ENCODE measurements at regions of chr9 and their contacts with region 1.

Region 1: DNA sequence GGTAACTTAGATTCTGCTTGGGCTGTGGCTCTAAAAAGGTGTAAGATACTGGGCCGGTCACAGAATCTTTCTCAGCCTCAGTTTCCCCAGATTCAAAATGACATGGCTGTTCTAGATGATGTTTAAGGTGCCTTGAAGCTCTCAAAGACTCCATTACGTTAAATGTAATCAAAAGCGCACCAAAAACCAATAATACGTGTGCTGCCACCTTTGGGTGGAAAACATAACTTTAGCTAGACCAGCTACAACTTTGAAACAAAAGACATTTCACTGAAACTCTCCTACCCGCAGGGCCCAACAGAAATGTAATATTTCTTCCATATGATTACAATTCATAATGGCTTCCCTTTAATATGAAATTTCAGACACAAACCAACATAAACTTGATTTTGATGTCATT is 35.0 kb upstream of the PCSK5 start:
- DNase-seq: peak in 1 of 2 experiments; percentile 4
- H3K4me3 ChIP-seq: no peak overlapping the region
- H3K4me3 Mint-ChIP-seq: no peak overlapping the region
- H3K27ac Mint-ChIP-seq: no peak overlapping the region
- H3K4me1 ChIP-seq: no peaks in the 10 kb centered on the region
- H3K4me1 Mint-ChIP-seq: no peaks in the 10 kb centered on the region
- H3K27me3 ChIP-seq: no peaks in the 10 kb centered on the region
- H3K27me3 Mint-ChIP-seq: no peaks in the 10 kb centered on the region
- CTCF ChIP-seq: peak in 1 of 2 experiments; percentile 22

Region 2: DNA sequence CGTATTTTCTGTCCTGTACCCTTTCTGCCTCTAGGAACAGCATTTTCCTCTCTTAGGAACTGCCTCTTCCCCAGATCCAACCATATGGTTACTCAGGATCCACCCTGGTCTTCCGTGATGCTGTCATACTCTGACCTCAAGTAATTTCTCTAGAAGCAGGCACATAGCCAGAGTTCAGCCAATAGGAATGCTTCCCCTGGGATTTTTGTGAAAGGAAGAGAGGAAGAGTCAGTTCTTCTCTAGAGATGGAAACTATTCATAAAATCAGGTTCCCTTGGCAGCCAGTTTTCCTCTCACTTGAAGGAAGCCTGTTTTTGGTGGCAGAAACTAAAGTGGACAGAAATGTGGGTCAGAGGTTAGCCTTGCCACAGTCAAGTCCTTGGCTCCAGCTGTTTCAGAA is 365.2 kb before region 1 on chr9:
- CTCF ChIA-PET with region 1: no interaction called
- POLR2A ChIA-PET with region 1: no interaction called
- intact Hi-C with region 1: loop called (anchors 5 kb)
- DNase-seq: no peak
- H3K4me3 ChIP-seq: no peak overlapping the region
- H3K4me3 Mint-ChIP-seq: no peak overlapping the region
- H3K27ac Mint-ChIP-seq: no peak overlapping the region
- H3K4me1 ChIP-seq: no peaks in the 10 kb centered on the region
- H3K4me1 Mint-ChIP-seq: no peaks in the 10 kb centered on the region
- H3K27me3 ChIP-seq: no peaks in the 10 kb centered on the region
- H3K27me3 Mint-ChIP-seq: peaks cover 2% of the 10 kb centered on the region
- CTCF ChIP-seq: no peak

Region 3: DNA sequence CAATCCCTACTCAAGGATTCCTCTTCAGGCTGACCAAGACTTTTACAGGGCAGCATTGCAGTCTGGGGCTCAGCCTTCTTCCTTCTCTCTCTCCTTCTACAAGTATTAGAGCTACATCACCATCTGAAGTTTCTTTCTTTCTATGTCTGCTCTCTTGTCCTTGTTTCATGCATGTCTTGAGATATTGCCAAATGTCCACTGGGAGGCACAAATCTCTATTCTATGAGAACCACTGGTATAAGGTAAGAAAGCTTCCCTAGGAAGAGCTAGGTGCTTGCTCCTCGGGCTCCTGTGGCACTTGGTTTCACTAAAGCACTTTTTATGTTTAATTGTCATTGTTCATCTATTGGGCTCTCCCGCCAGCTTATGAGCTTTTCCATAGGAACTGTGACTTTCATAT is 254.2 kb before region 1 on chr9:
- CTCF ChIA-PET with region 1: interaction called, 15 read pairs
- POLR2A ChIA-PET with region 1: no interaction called
- intact Hi-C with region 1: no loop called
- DNase-seq: peak in 1 of 2 experiments; percentile 0
- H3K4me3 ChIP-seq: no peak overlapping the region
- H3K4me3 Mint-ChIP-seq: no peak overlapping the region
- H3K27ac Mint-ChIP-seq: no peak overlapping the region
- H3K4me1 ChIP-seq: no peaks in the 10 kb centered on the region
- H3K4me1 Mint-ChIP-seq: no peaks in the 10 kb centered on the region
- H3K27me3 ChIP-seq: no peaks in the 10 kb centered on the region
- H3K27me3 Mint-ChIP-seq: no peaks in the 10 kb centered on the region
- CTCF ChIP-seq: no peak

Region 4: GRCh38 chr9:75814667-75815066 is 40.8 kb before region 1 on chr9:
- CTCF ChIA-PET with region 1: no interaction called
- POLR2A ChIA-PET with region 1: interaction called, 13 read pairs
- intact Hi-C with region 1: no loop called
- DNase-seq: no peak
- H3K4me3 ChIP-seq: no peak overlapping the region
- H3K4me3 Mint-ChIP-seq: no peak overlapping the region
- H3K27ac Mint-ChIP-seq: no peak overlapping the region
- H3K4me1 ChIP-seq: no peaks in the 10 kb centered on the region
- H3K4me1 Mint-ChIP-seq: no peaks in the 10 kb centered on the region
- H3K27me3 ChIP-seq: no peaks in the 10 kb centered on the region
- H3K27me3 Mint-ChIP-seq: no peaks in the 10 kb centered on the region
- CTCF ChIP-seq: no peak

Region 5: GRCh38 chr9:75830303-75830702 is 25.2 kb before region 1 on chr9:
- CTCF ChIA-PET with region 1: no interaction called
- POLR2A ChIA-PET with region 1: no interaction called
- intact Hi-C with region 1: no loop called
- DNase-seq: no peak
- H3K4me3 ChIP-seq: no peak overlapping the region
- H3K4me3 Mint-ChIP-seq: no peak overlapping the region
- H3K27ac Mint-ChIP-seq: no peak overlapping the region
- H3K4me1 ChIP-seq: no peaks in the 10 kb centered on the region
- H3K4me1 Mint-ChIP-seq: peaks cover 7% of the 10 kb centered on the region
- H3K27me3 ChIP-seq: no peaks in the 10 kb centered on the region
- H3K27me3 Mint-ChIP-seq: no peaks in the 10 kb centered on the region
- CTCF ChIP-seq: no peak